Activated naive CD4-positive, alpha-beta T cell treated with anti-CD3 and anti-CD28 coated beads, Interleukin-2, amount 10 ng/mL, durations not matched to agents 7 days and 5 days (primary cell): ENCODE measurements at regions of chr9 and their contacts with region 1.

Region 1: GRCh38 chr9:87336914-87337333 is 160.7 kb upstream of the DAPK1 start:
- DNase-seq: no peak
- H3K4me3 Mint-ChIP-seq: no peak overlapping the region
- H3K27ac Mint-ChIP-seq: no peak overlapping the region
- H3K4me1 Mint-ChIP-seq: peaks cover 5% of the 10 kb centered on the region
- H3K27me3 Mint-ChIP-seq: peaks cover 31% of the 10 kb centered on the region

Region 2: GRCh38 chr9:87223392-87224246 is 113.3 kb before region 1 on chr9:
- CTCF ChIA-PET with region 1: no interaction called
- DNase-seq: no peak
- H3K4me3 Mint-ChIP-seq: no peak overlapping the region
- H3K27ac Mint-ChIP-seq: no peak overlapping the region
- H3K4me1 Mint-ChIP-seq: no peaks in the 10 kb centered on the region
- H3K27me3 Mint-ChIP-seq: no peaks in the 10 kb centered on the region

Region 3: DNA sequence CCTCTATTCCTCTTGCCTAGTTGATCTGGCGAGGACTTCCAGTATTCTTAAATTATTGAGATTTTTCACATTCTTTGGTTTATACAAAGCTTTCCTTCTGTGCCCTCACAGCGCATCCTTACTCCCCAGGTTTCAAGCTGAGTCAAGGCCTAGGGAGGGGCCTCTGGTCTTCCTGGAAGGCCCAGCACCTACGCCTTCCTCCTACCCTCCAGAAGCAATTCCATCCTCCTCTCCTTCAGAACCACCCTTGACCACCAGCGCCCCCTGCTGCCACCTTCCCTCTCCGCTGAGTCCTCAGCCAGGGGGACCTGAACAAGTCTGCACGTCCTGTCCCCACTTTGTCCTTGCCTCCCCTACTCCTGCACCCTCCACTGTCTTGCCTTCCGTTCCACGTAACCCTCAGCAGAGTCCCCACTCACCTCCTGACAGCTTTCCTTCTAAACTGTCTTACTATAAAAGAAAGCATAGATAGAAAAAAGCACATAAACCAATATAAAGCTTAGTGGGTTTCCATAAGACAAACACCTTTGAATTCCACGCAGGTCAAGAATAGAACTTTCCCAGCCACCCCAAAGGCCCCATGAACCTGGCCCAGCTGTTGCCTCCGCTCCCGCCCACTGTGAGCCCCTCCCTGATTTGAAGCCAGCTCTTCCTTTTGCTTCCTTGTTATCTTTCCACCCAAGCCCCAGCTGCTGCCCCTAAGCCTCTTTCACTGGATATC is 326.0 kb after region 1 on chr9:
- CTCF ChIA-PET with region 1: interaction called, 15 read pairs
- DNase-seq: peak; percentile 64
- H3K4me3 Mint-ChIP-seq: no peak overlapping the region
- H3K27ac Mint-ChIP-seq: no peak overlapping the region
- H3K4me1 Mint-ChIP-seq: no peaks in the 10 kb centered on the region
- H3K27me3 Mint-ChIP-seq: peaks cover 16% of the 10 kb centered on the region